Lower lobe of right lung (tissue), 2 donors: ENCODE measurements at regions of chr3 and their contacts with region 1.

Region 1: GRCh38 chr3:77038468-77038929 is 1.4 kb upstream of the ROBO2 start:
- DNase-seq: peak; percentile 64
- ATAC-seq: peak; percentile 90
- H3K4me3 ChIP-seq: peak overlapping the region; percentile 54
- H3K27ac ChIP-seq: no peak overlapping the region
- H3K4me1 ChIP-seq: peaks cover 5% of the 10 kb centered on the region
- H3K27me3 ChIP-seq: peaks cover 23% of the 10 kb centered on the region
- CTCF ChIP-seq: peak; percentile 58

Region 2: GRCh38 chr3:77179762-77180161 is 141.3 kb after region 1 on chr3:
- intact Hi-C with region 1: no loop called
- DNase-seq: no peak
- ATAC-seq: no peak
- H3K4me3 ChIP-seq: no peak overlapping the region
- H3K27ac ChIP-seq: no peak overlapping the region
- H3K4me1 ChIP-seq: no peaks in the 10 kb centered on the region
- H3K27me3 ChIP-seq: no peaks in the 10 kb centered on the region
- CTCF ChIP-seq: no peak

Region 3: GRCh38 chr3:77254967-77255831 is 216.7 kb after region 1 on chr3:
- intact Hi-C with region 1: loop called (anchors 5 kb)
- DNase-seq: no peak
- ATAC-seq: peak; percentile 69 to 77
- H3K4me3 ChIP-seq: no peak overlapping the region
- H3K27ac ChIP-seq: no peak overlapping the region
- H3K4me1 ChIP-seq: no peaks in the 10 kb centered on the region
- H3K27me3 ChIP-seq: no peaks in the 10 kb centered on the region
- CTCF ChIP-seq: peak; percentile 58